ENCODE measurements at regions of chr17 and their contacts with region 1.

Region 1: GRCh38 chr17:73645050-73645978 is 1.1 kb upstream of the SDK2 start:
- DNase-seq: peak; percentile 34
- H3K4me3 Mint-ChIP-seq: no peak overlapping the region
- H3K27ac Mint-ChIP-seq: no peak overlapping the region
- H3K4me1 Mint-ChIP-seq: peaks cover 9% of the 10 kb centered on the region
- H3K27me3 Mint-ChIP-seq: peaks cover 21% of the 10 kb centered on the region

Region 2: GRCh38 chr17:73719588-73720071 is 74.3 kb after region 1 on chr17:
- CTCF ChIA-PET with region 1: interaction called, 3 read pairs
- POLR2A ChIA-PET with region 1: no interaction called
- intact Hi-C with region 1: loop called (anchors 5 kb)
- DNase-seq: no peak
- H3K4me3 Mint-ChIP-seq: no peak overlapping the region
- H3K27ac Mint-ChIP-seq: peak overlapping the region; percentile 3
- H3K4me1 Mint-ChIP-seq: peaks cover 39% of the 10 kb centered on the region
- H3K27me3 Mint-ChIP-seq: no peaks in the 10 kb centered on the region

Region 3: GRCh38 chr17:73956669-73957465 is 311.6 kb after region 1 on chr17:
- CTCF ChIA-PET with region 1: no interaction called
- POLR2A ChIA-PET with region 1: no interaction called
- intact Hi-C with region 1: loop called (anchors 10 kb)
- DNase-seq: peak; percentile 65
- H3K4me3 Mint-ChIP-seq: no peak overlapping the region
- H3K27ac Mint-ChIP-seq: no peak overlapping the region
- H3K4me1 Mint-ChIP-seq: peaks cover 3% of the 10 kb centered on the region
- H3K27me3 Mint-ChIP-seq: peaks cover 3% of the 10 kb centered on the region